CD4-positive, alpha-beta memory T cell (primary cell): ENCODE measurements at regions of chr6 and their contacts with region 1.

Region 1: DNA sequence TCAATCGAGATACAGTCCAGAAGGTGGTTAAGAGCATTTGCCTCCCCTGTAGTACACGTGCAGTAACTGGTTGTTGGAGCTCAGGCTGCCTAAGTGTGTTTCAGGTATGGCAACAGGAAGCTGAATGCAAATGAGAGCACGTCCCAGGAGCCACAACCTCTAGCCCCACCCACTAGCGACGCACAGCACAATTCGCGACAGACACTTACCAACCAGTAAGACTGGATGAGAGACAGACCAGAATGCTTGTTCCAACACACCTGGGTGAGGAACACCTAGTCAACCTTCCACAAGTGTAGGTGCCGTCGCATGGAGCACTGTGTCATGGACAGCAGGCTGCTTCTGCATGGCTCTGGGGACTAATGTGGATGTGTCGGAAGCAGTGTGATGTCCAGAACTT is 7.2 kb upstream of the SERPINB1 start:
- DNase-seq: peak; percentile 61 to 89 (median 72)
- H3K4me3 ChIP-seq: peak overlapping the region in 1 of 2 donors; percentile 29
- H3K4me3 Mint-ChIP-seq: peak overlapping the region in 6 of 8 donors; percentile 40 to 80 (median 67)
- H3K27ac ChIP-seq: peak overlapping the region; percentile 5
- H3K27ac Mint-ChIP-seq: peak overlapping the region; percentile 66 to 96 (median 90)
- H3K4me1 ChIP-seq: peaks cover 43% of the 10 kb centered on the region
- H3K4me1 Mint-ChIP-seq: peaks cover 23 to 55% (median 42%) of the 10 kb centered on the region in 4 donors
- H3K27me3 ChIP-seq: no peaks in the 10 kb centered on the region
- H3K27me3 Mint-ChIP-seq: no peaks in the 10 kb centered on the region

Region 2: GRCh38 chr6:2777250-2777649 is 71.6 kb before region 1 on chr6:
- CTCF ChIA-PET with region 1: no interaction called
- POLR2A ChIA-PET with region 1: no interaction called
- intact Hi-C with region 1: no loop called
- DNase-seq: no peak
- H3K4me3 ChIP-seq: no peak overlapping the region
- H3K4me3 Mint-ChIP-seq: no peak overlapping the region
- H3K27ac ChIP-seq: no peak overlapping the region
- H3K27ac Mint-ChIP-seq: peak overlapping the region in 3 of 7 donors; percentile 3 to 63 (median 48)
- H3K4me1 ChIP-seq: no peaks in the 10 kb centered on the region
- H3K4me1 Mint-ChIP-seq: peaks cover 25 to 52% (median 36%) of the 10 kb centered on the region in 4 donors
- H3K27me3 ChIP-seq: no peaks in the 10 kb centered on the region
- H3K27me3 Mint-ChIP-seq: no peaks in the 10 kb centered on the region

Region 3: DNA sequence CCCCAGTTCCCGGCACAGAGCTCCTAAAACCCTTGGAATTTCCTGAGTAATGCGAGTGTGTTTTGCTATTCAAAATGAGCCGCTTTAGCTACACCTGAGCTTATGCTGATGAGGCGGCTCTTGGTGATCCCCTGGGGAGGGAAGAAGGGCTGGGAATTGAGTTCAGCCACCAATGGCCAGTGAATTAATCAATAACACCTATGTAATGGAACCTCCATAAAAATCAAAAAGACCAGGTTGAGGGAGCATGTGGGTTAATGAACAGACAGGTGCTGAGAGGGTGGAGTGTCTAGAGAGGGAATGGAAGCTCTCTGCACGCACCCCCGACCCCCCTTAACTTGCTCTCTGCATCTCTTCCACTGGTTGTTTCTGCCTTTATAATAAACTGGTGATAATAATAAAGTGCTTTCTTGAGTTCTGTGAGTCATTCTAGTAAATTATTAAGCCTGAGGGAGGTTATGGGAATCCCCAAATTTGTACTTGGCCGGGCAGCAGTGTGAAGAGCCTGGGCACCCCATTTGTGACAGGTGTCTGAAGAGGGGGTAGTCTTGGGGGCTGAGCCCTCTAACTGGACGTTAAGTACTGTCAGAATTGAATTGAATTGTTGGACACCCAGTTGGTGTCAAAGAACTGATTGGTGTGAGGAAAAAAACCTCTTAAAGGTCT is 17.5 kb after region 1 on chr6:
- CTCF ChIA-PET with region 1: interaction called, 20 read pairs
- POLR2A ChIA-PET with region 1: interaction called, 7 read pairs
- intact Hi-C with region 1: no loop called
- DNase-seq: no peak
- H3K4me3 ChIP-seq: no peak overlapping the region
- H3K4me3 Mint-ChIP-seq: no peak overlapping the region
- H3K27ac ChIP-seq: no peak overlapping the region
- H3K27ac Mint-ChIP-seq: peak overlapping the region in 1 of 7 donors; percentile 48
- H3K4me1 ChIP-seq: peaks cover 36% of the 10 kb centered on the region
- H3K4me1 Mint-ChIP-seq: peaks cover 34 to 67% (median 48%) of the 10 kb centered on the region in 4 donors
- H3K27me3 ChIP-seq: no peaks in the 10 kb centered on the region
- H3K27me3 Mint-ChIP-seq: no peaks in the 10 kb centered on the region

Region 4: GRCh38 chr6:2883673-2884072 is 34.8 kb after region 1 on chr6:
- CTCF ChIA-PET with region 1: interaction called, 15 read pairs
- POLR2A ChIA-PET with region 1: interaction called, 4 read pairs
- intact Hi-C with region 1: loop called (anchors 1 kb)
- DNase-seq: no peak
- H3K4me3 ChIP-seq: no peak overlapping the region
- H3K4me3 Mint-ChIP-seq: peak overlapping the region in 1 of 8 donors; percentile 12
- H3K27ac ChIP-seq: no peak overlapping the region
- H3K27ac Mint-ChIP-seq: peak overlapping the region in 6 of 7 donors; percentile 4 to 87 (median 72)
- H3K4me1 ChIP-seq: peaks cover 44% of the 10 kb centered on the region
- H3K4me1 Mint-ChIP-seq: peaks cover 56 to 82% (median 69%) of the 10 kb centered on the region in 4 donors
- H3K27me3 ChIP-seq: no peaks in the 10 kb centered on the region
- H3K27me3 Mint-ChIP-seq: no peaks in the 10 kb centered on the region

Region 5: GRCh38 chr6:2900821-2901644 is 52.2 kb after region 1 on chr6:
- CTCF ChIA-PET with region 1: interaction called, 135 read pairs
- POLR2A ChIA-PET with region 1: interaction called, 33 read pairs
- intact Hi-C with region 1: loop called (anchors 2 kb)
- DNase-seq: peak in 1 of 5 donors; percentile 22
- H3K4me3 ChIP-seq: peak overlapping the region; percentile 42 to 92
- H3K4me3 Mint-ChIP-seq: peak overlapping the region; percentile 99 to 100 (median 99)
- H3K27ac ChIP-seq: peak overlapping the region; percentile 82
- H3K27ac Mint-ChIP-seq: peak overlapping the region; percentile 91 to 99 (median 98)
- H3K4me1 ChIP-seq: peaks cover 57% of the 10 kb centered on the region
- H3K4me1 Mint-ChIP-seq: peaks cover 44 to 66% (median 54%) of the 10 kb centered on the region in 4 donors
- H3K27me3 ChIP-seq: no peaks in the 10 kb centered on the region
- H3K27me3 Mint-ChIP-seq: no peaks in the 10 kb centered on the region

Region 6: DNA sequence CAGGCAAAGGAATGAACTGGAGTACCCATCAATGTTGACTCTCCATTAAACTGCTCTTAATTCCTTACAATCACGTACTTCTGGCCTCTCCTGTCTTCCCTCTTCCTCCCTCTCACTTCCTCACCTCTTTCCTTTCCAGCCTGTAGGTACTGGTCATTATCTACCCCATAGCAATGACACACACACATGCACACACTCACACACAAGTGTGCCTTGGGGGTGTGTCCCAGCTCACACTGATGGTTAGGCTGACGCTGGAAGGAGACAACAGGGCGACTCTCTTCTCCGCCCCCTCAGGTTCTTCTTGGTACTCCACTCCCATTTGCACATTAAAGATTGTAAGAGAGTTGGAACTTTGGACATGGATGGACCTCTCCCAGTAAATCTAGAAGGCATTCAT is 68.2 kb after region 1 on chr6:
- CTCF ChIA-PET with region 1: interaction called, 223 read pairs
- POLR2A ChIA-PET with region 1: interaction called, 59 read pairs
- intact Hi-C with region 1: no loop called
- DNase-seq: no peak
- H3K4me3 ChIP-seq: no peak overlapping the region
- H3K4me3 Mint-ChIP-seq: no peak overlapping the region
- H3K27ac ChIP-seq: no peak overlapping the region
- H3K27ac Mint-ChIP-seq: no peak overlapping the region
- H3K4me1 ChIP-seq: peaks cover 11% of the 10 kb centered on the region
- H3K4me1 Mint-ChIP-seq: peaks cover 7 to 12% (median 8%) of the 10 kb centered on the region in 4 donors
- H3K27me3 ChIP-seq: no peaks in the 10 kb centered on the region
- H3K27me3 Mint-ChIP-seq: peaks cover 0 to 2% of the 10 kb centered on the region in 2 donors

Region 7: GRCh38 chr6:2940010-2940850 is 91.4 kb after region 1 on chr6:
- CTCF ChIA-PET with region 1: interaction called, 186 read pairs
- POLR2A ChIA-PET with region 1: interaction called, 14 read pairs
- intact Hi-C with region 1: no loop called
- DNase-seq: peak; percentile 76 to 93 (median 80)
- H3K4me3 ChIP-seq: peak overlapping the region; percentile 58 to 59
- H3K4me3 Mint-ChIP-seq: peak overlapping the region; percentile 79 to 95 (median 90)
- H3K27ac ChIP-seq: peak overlapping the region; percentile 61
- H3K27ac Mint-ChIP-seq: peak overlapping the region; percentile 89 to 99 (median 96)
- H3K4me1 ChIP-seq: peaks cover 81% of the 10 kb centered on the region
- H3K4me1 Mint-ChIP-seq: peaks cover 49 to 73% (median 60%) of the 10 kb centered on the region in 4 donors
- H3K27me3 ChIP-seq: no peaks in the 10 kb centered on the region
- H3K27me3 Mint-ChIP-seq: no peaks in the 10 kb centered on the region

Region 8: GRCh38 chr6:4055420-4056041 is 1206.7 kb after region 1 on chr6:
- CTCF ChIA-PET with region 1: no interaction called
- POLR2A ChIA-PET with region 1: no interaction called
- intact Hi-C with region 1: no loop called
- DNase-seq: peak in 1 of 5 donors; percentile 2
- H3K4me3 ChIP-seq: no peak overlapping the region
- H3K4me3 Mint-ChIP-seq: no peak overlapping the region
- H3K27ac ChIP-seq: no peak overlapping the region
- H3K27ac Mint-ChIP-seq: peak overlapping the region in 4 of 7 donors; percentile 34 to 70 (median 60)
- H3K4me1 ChIP-seq: no peaks in the 10 kb centered on the region
- H3K4me1 Mint-ChIP-seq: peaks cover 8 to 15% (median 11%) of the 10 kb centered on the region in 4 donors
- H3K27me3 ChIP-seq: no peaks in the 10 kb centered on the region
- H3K27me3 Mint-ChIP-seq: no peaks in the 10 kb centered on the region